HCT116 (cell line): ENCODE measurements at regions of chr21 and their contacts with region 1.

Region 1: GRCh38 chr21:14259747-14260146 is 43.8 kb downstream of the RBM11 start:
- DNase-seq: peak; percentile 10
- ATAC-seq: peak; percentile 58; the same call in 1 of the 2 replicates
- H3K4me3 ChIP-seq: no peak overlapping the region
- H3K27ac ChIP-seq: no peak overlapping the region
- H3K4me1 ChIP-seq: no peaks in the 10 kb centered on the region
- H3K27me3 ChIP-seq: no peaks in the 10 kb centered on the region
- CTCF ChIP-seq: peak in 2 of 3 experiments; percentile 34 to 56; a peak in 3 of 6 replicates
- POLR2A ChIP-seq: no peak
- RAD21 ChIP-seq: no peak; the same call in 1 of the 2 replicates

Region 2: DNA sequence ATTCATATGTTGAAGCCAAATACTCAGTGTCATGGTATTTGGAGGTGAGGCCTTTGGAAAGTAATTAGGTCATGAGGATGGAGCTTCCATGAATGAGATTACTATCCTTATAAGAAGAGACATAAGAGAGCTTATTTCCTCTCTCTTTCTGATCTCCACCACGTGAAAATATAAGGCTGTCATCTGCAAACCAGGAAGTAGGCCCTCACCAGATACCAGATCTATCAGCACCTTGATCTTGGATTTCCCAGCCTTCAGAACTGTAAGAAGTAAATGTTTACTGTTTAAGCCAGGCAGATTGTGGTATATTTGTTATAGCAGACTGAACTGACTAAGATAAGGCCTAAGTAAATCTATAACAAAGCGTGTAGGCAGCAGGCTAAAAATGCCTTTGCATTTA is 18.4 kb before region 1 on chr21:
- CTCF ChIA-PET with region 1: no interaction called
- POLR2A ChIA-PET with region 1: no interaction called
- RAD21 ChIA-PET with region 1: no interaction called
- intact Hi-C with region 1: no loop called
- DNase-seq: no peak
- ATAC-seq: no peak
- H3K4me3 ChIP-seq: no peak overlapping the region
- H3K27ac ChIP-seq: no peak overlapping the region
- H3K4me1 ChIP-seq: no peaks in the 10 kb centered on the region
- H3K27me3 ChIP-seq: no peaks in the 10 kb centered on the region
- CTCF ChIP-seq: no peak
- POLR2A ChIP-seq: no peak
- RAD21 ChIP-seq: no peak

Region 3: DNA sequence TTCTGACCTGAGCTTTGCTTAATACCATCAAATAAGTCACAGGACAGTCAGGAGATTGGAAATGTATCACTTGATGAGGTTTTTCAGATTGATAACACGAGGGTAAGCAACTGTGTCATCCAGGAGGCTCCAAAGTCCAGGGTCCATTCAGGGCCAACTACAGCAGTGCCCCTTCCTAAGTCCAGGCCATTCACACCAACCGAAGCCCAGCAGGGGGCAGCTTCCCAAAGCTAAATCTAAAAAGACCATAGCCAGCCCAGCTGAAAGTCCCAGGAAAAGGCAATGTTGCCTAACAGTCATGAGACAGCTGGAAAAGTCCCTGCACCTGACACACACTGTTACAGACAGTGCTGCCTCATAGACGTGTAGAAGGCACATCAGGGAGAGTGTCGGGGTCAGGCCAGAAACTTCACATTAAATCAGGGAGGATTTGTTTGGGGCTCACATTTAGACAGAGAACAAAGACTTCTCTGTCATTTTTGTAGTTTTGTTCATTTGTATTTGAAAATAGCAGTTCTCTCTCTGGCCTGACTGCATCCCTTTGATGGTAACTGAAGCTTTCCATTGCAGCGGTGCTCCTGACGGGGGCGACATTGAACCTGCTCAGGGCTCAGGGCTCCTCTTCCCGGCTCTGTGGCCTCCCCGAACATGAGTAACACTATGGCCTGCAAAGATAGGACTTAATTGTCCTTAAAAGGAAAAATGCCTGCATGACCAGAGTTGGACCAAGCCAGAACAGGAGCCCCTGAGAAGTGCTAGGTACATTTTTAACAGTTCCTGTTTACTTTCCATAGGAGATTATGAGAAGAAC is 604.7 kb after region 1 on chr21:
- CTCF ChIA-PET with region 1: no interaction called
- POLR2A ChIA-PET with region 1: no interaction called
- RAD21 ChIA-PET with region 1: no interaction called
- intact Hi-C with region 1: no loop called
- DNase-seq: no peak
- ATAC-seq: peak; percentile 93
- H3K4me3 ChIP-seq: no peak overlapping the region
- H3K27ac ChIP-seq: peak overlapping the region; percentile 41
- H3K4me1 ChIP-seq: peaks cover 10 to 19% of the 10 kb centered on the region in 2 experiments; a peak in 2 of 4 replicates
- H3K27me3 ChIP-seq: no peaks in the 10 kb centered on the region
- CTCF ChIP-seq: peak; percentile 14 to 67 (median 62); a peak in 4 of 6 replicates
- POLR2A ChIP-seq: no peak
- RAD21 ChIP-seq: peak; percentile 63

Region 4: GRCh38 chr21:15493646-15494045 is 1233.9 kb after region 1 on chr21:
- CTCF ChIA-PET with region 1: no interaction called
- POLR2A ChIA-PET with region 1: no interaction called
- RAD21 ChIA-PET with region 1: no interaction called
- intact Hi-C with region 1: loop called (anchors 5 kb)
- DNase-seq: no peak
- ATAC-seq: no peak
- H3K4me3 ChIP-seq: no peak overlapping the region
- H3K27ac ChIP-seq: no peak overlapping the region
- H3K4me1 ChIP-seq: no peaks in the 10 kb centered on the region
- H3K27me3 ChIP-seq: no peaks in the 10 kb centered on the region
- CTCF ChIP-seq: no peak
- POLR2A ChIP-seq: no peak
- RAD21 ChIP-seq: no peak

Region 5: DNA sequence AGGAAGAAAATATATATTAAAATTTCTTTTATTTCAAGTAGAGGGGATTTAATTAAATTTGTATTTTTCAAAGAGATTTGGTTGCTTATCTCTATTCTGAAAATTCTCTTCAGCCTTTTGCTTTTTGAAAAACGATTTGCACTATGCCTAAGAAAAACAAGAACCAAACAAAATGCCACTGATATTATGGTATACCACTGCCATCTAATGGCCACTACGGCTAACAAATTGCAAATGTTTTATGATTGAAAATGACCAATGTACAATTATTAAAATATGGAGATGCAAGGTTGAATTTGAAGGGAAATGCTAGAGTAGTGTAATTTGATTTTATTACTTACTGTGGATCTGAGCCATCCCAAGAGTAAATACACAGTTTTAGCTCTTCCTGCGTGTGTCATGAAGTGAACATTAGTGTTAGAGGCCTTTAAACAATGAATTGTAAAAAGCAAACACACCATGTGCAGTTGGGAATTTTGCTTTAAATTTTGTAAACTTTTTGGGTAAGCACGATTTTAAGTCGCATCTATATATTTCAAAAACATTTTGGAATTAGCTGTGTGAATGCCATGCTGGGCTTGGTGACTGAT is 1332.6 kb after region 1 on chr21:
- CTCF ChIA-PET with region 1: no interaction called
- POLR2A ChIA-PET with region 1: no interaction called
- RAD21 ChIA-PET with region 1: no interaction called
- intact Hi-C with region 1: loop called (anchors 2 kb)
- DNase-seq: peak; percentile 21
- ATAC-seq: no peak
- H3K4me3 ChIP-seq: no peak overlapping the region
- H3K27ac ChIP-seq: no peak overlapping the region
- H3K4me1 ChIP-seq: no peaks in the 10 kb centered on the region
- H3K27me3 ChIP-seq: no peaks in the 10 kb centered on the region
- CTCF ChIP-seq: peak; percentile 24 to 69 (median 37); a peak in 5 of 6 replicates
- POLR2A ChIP-seq: no peak
- RAD21 ChIP-seq: peak; percentile 56